ENCODE measurements at regions of chr15 and their contacts with region 1.

Region 1: DNA sequence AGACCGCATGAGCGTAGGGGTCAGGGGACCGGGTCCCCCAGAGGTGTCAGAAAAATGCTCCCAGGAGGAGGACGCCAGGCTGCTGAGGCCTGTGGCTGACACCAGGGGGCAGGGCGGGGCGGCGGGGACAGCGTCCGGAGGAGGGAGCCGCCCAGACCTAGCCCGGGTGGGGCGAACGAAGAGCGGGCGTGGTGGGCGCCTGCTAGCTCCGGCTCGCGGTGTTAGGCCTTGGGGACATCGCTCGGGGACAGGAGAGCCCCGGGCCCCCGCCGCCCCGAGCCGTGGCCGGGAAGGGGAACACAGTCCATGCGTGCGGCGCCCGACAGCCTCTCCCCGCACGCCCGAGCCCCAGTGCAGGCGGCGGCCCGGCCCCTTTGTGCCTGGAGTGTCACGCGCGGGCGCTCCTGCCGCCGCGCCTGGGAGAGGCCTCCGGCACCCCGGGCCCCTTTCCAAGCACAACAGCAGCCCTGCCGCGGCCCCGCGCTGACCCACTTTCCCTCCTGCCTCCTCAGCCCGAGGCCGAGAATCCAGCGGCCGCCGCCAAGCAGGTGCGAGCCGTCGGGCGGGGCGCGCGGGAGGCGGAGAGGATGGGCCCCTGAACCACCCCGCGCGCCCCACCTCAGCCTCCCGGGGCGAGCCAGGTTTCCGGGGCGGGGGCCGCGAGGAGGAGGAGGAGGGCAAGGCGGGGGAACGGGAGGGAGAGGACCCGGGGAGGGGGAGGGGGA is 111.0 kb upstream of the KLF13 start:
- DNase-seq: peak; percentile 94
- H3K4me3 ChIP-seq: peak overlapping the region; percentile 55 to 60
- H3K27ac ChIP-seq: peak overlapping the region in 1 of 2 experiments; percentile 72; a peak in 1 of 4 replicates
- H3K4me1 ChIP-seq: peaks cover 0 to 32% of the 10 kb centered on the region in 2 experiments; a peak in 2 of 4 replicates
- H3K27me3 ChIP-seq: no peaks in the 10 kb centered on the region
- CTCF ChIP-seq: peak; percentile 74
- EP300 ChIP-seq: no peak
- RAD21 ChIP-seq: peak; percentile 74

Region 2: GRCh38 chr15:31200735-31201151 is 14.9 kb before region 1 on chr15:
- CTCF ChIA-PET with region 1: interaction called, 18 read pairs
- POLR2A ChIA-PET with region 1: no interaction called
- DNase-seq: peak; percentile 59
- H3K4me3 ChIP-seq: 0 out of 4 replicates have a peak overlapping the region, but pooled peaks of 1 of the 2 experiments have one; percentile 19
- H3K27ac ChIP-seq: no peak overlapping the region
- H3K4me1 ChIP-seq: peaks cover 0 to 7% of the 10 kb centered on the region in 2 experiments; a peak in 1 of 4 replicates
- H3K27me3 ChIP-seq: peaks cover 8% of the 10 kb centered on the region; the same call in 1 of the 2 replicates
- CTCF ChIP-seq: no peak
- EP300 ChIP-seq: no peak
- RAD21 ChIP-seq: peak; percentile 71

Region 3: GRCh38 chr15:31228985-31229826 is 13.6 kb after region 1 on chr15:
- CTCF ChIA-PET with region 1: interaction called, 11 read pairs
- POLR2A ChIA-PET with region 1: interaction called, 3 read pairs
- DNase-seq: no peak
- H3K4me3 ChIP-seq: no peak overlapping the region
- H3K27ac ChIP-seq: no peak overlapping the region
- H3K4me1 ChIP-seq: peaks cover 0 to 5% of the 10 kb centered on the region in 2 experiments; a peak in 1 of 4 replicates
- H3K27me3 ChIP-seq: no peaks in the 10 kb centered on the region
- CTCF ChIP-seq: no peak
- EP300 ChIP-seq: no peak
- RAD21 ChIP-seq: no peak

Region 4: GRCh38 chr15:31302778-31303725 is 87.4 kb after region 1 on chr15:
- CTCF ChIA-PET with region 1: interaction called, 12 read pairs
- POLR2A ChIA-PET with region 1: interaction called, 4 read pairs
- DNase-seq: no peak
- H3K4me3 ChIP-seq: no peak overlapping the region
- H3K27ac ChIP-seq: no peak overlapping the region
- H3K4me1 ChIP-seq: peaks cover 0 to 73% of the 10 kb centered on the region in 2 experiments; a peak in 2 of 4 replicates
- H3K27me3 ChIP-seq: 0 out of 2 replicates have a peak, but pooled peaks cover 8% of the 10 kb centered on the region
- CTCF ChIP-seq: no peak
- EP300 ChIP-seq: no peak
- RAD21 ChIP-seq: no peak